MCF 10A (cell line): ENCODE measurements at regions of chr6 and their contacts with region 1.

Region 1: DNA sequence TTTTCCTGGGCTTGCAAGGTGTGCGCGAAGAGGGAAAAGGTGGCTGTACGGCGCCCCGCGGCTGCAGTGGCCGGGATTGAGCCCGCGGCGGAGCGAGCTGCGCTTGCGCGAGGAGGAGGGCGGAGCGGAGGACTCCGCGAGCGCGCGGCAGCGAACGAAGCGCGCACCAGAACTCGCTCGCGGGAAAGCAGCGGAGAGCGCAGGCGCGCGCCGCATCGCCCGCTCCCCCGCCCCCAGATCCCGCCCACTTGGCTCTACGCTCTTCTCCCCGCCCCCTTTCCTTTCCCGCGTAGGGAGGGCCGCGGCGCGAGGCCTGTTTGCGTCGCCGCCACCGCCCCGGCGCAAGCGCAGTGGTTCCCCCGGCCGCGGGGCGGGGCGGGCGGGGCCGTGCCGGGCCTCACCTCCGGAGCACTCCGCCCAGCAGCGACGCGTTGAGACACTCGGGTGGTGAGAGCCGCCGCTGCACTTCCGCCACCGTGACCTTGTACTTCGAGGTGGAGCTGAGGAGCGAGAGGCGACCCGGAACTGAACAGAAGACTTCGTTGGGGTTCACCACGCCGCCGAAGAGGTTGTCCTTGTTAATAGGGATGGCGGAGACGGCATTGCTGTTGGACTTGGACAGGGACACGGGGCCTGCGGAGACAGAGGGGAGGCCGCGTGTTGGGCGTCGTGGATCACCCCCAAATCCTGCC is 10.6 kb downstream of the TFAP2A start:
- DNase-seq: peak; percentile 97
- H3K4me3 Mint-ChIP-seq: peak overlapping the region; percentile 94
- H3K27ac Mint-ChIP-seq: peak overlapping the region; percentile 99
- H3K4me1 Mint-ChIP-seq: peaks cover 75% of the 10 kb centered on the region
- H3K27me3 Mint-ChIP-seq: no peaks in the 10 kb centered on the region
- CTCF ChIP-seq: peak; percentile 35

Region 2: DNA sequence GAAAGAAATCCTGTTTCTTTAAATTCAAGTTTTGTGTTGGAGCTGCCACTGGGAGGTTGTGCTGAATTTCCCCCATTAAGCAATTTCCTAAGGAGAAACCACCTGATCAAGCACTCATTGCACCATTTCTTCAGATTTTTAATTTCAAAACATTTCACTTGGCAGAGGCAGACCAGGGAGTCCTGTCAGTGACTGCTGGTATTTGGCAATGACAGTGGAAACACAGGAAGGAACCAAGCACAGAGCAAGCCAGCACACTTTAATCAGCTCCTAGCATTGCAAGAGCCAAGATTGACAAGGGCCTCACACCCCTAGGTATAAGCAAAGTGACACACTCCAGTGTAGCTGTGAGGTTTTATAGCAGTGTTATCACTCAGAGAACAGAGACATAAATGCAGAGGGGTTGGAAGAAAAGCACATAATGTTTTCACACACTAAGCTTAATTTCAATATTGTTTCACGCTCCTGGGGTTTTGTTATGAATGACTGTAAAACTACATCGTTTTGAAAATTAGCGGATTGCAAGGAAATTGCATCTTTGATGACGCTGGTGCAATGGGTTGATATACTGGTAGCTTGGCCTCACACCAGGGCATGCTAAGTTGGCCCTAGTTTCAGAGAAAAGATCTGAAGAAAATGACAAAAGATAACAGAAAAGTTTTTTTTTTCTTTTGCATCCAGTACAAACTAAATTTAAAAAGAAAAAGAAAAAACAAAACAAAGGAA is 757.7 kb before region 1 on chr6:
- CTCF ChIA-PET with region 1: no interaction called
- POLR2A ChIA-PET with region 1: interaction called, 5 read pairs
- intact Hi-C with region 1: loop called (anchors 10 kb)
- DNase-seq: peak; percentile 92
- H3K4me3 Mint-ChIP-seq: no peak overlapping the region
- H3K27ac Mint-ChIP-seq: peak overlapping the region; percentile 32
- H3K4me1 Mint-ChIP-seq: peaks cover 23% of the 10 kb centered on the region
- H3K27me3 Mint-ChIP-seq: no peaks in the 10 kb centered on the region
- CTCF ChIP-seq: no peak

Region 3: DNA sequence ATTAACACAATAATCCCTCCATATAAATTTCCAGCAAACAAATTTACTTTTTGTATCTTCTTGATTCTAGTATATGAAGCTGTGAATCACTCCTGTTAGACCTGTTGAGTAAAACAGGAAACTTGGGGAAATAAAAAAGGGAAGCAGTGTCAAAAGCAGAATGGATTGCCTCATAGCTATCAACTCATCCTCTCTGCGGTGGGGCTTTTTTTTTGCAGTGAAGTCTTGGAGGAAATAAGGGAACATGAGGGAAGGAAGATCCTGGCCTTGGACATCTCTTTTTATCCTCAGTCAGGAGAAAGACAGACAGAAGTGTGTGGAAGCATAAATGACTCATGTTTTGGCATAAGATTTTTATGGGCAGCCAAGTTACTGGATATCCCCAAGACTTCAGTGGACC is 321.9 kb before region 1 on chr6:
- CTCF ChIA-PET with region 1: interaction called, 12 read pairs
- POLR2A ChIA-PET with region 1: interaction called, 103 read pairs
- intact Hi-C with region 1: loop called (anchors 1 kb)
- DNase-seq: peak; percentile 71
- H3K4me3 Mint-ChIP-seq: no peak overlapping the region
- H3K27ac Mint-ChIP-seq: peak overlapping the region; percentile 33
- H3K4me1 Mint-ChIP-seq: peaks cover 49% of the 10 kb centered on the region
- H3K27me3 Mint-ChIP-seq: no peaks in the 10 kb centered on the region
- CTCF ChIP-seq: no peak

Region 4: GRCh38 chr6:10237284-10238043 is 166.8 kb before region 1 on chr6:
- CTCF ChIA-PET with region 1: no interaction called
- POLR2A ChIA-PET with region 1: interaction called, 3 read pairs
- intact Hi-C with region 1: loop called (anchors 5 kb)
- DNase-seq: peak; percentile 95
- H3K4me3 Mint-ChIP-seq: no peak overlapping the region
- H3K27ac Mint-ChIP-seq: peak overlapping the region; percentile 86
- H3K4me1 Mint-ChIP-seq: peaks cover 14% of the 10 kb centered on the region
- H3K27me3 Mint-ChIP-seq: no peaks in the 10 kb centered on the region
- CTCF ChIP-seq: no peak

Region 5: DNA sequence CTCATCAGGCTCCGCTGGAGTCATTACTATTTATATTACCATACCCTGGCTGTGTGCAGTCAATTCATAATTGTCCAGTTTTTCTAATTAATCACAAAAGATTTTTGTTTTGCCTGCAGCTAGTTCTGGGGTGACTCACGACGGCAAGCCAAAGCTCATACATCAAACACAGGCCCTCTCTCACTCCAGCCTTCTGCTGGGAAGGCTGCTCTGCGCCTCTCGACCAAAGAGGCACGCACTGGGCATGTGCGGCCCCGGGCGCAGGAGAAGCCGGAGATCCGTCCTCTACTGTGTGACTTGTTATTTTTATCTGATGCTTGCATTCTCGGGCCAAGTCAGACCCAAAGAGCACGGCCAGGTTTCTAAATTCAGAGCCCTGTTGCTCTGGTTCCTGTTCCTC is 87.9 kb before region 1 on chr6:
- CTCF ChIA-PET with region 1: interaction called, 4 read pairs
- POLR2A ChIA-PET with region 1: interaction called, 16 read pairs
- intact Hi-C with region 1: loop called (anchors 5 kb)
- DNase-seq: peak; percentile 88
- H3K4me3 Mint-ChIP-seq: peak overlapping the region; percentile 28
- H3K27ac Mint-ChIP-seq: peak overlapping the region; percentile 86
- H3K4me1 Mint-ChIP-seq: peaks cover 14% of the 10 kb centered on the region
- H3K27me3 Mint-ChIP-seq: no peaks in the 10 kb centered on the region
- CTCF ChIP-seq: no peak

Region 6: GRCh38 chr6:10429638-10430427 is 25.6 kb after region 1 on chr6:
- CTCF ChIA-PET with region 1: interaction called, 9 read pairs
- POLR2A ChIA-PET with region 1: interaction called, 763 read pairs
- intact Hi-C with region 1: no loop called
- DNase-seq: peak; percentile 88
- H3K4me3 Mint-ChIP-seq: no peak overlapping the region
- H3K27ac Mint-ChIP-seq: peak overlapping the region; percentile 92
- H3K4me1 Mint-ChIP-seq: peaks cover 40% of the 10 kb centered on the region
- H3K27me3 Mint-ChIP-seq: no peaks in the 10 kb centered on the region
- CTCF ChIP-seq: peak; percentile 67

Region 7: GRCh38 chr6:10441004-10441662 is 36.9 kb after region 1 on chr6:
- CTCF ChIA-PET with region 1: interaction called, 4 read pairs
- POLR2A ChIA-PET with region 1: interaction called, 763 read pairs
- intact Hi-C with region 1: no loop called
- DNase-seq: peak; percentile 98
- H3K4me3 Mint-ChIP-seq: peak overlapping the region; percentile 40
- H3K27ac Mint-ChIP-seq: peak overlapping the region; percentile 98
- H3K4me1 Mint-ChIP-seq: peaks cover 15% of the 10 kb centered on the region
- H3K27me3 Mint-ChIP-seq: no peaks in the 10 kb centered on the region
- CTCF ChIP-seq: no peak

Region 8: GRCh38 chr6:10582774-10583508 is 178.7 kb after region 1 on chr6:
- CTCF ChIA-PET with region 1: no interaction called
- POLR2A ChIA-PET with region 1: no interaction called
- intact Hi-C with region 1: no loop called
- DNase-seq: peak; percentile 10
- H3K4me3 Mint-ChIP-seq: no peak overlapping the region
- H3K27ac Mint-ChIP-seq: no peak overlapping the region
- H3K4me1 Mint-ChIP-seq: no peaks in the 10 kb centered on the region
- H3K27me3 Mint-ChIP-seq: no peaks in the 10 kb centered on the region
- CTCF ChIP-seq: no peak